GM13977 (cell line): ENCODE measurements at regions of chr18 and their contacts with region 1.

Region 1: GRCh38 chr18:32919799-32920198 is 147.0 kb upstream of the KLHL14 start:
- DNase-seq: peak; percentile 56
- CTCF ChIP-seq: peak; percentile 72

Region 2: GRCh38 chr18:32714571-32715148 is 205.1 kb before region 1 on chr18:
- in situ Hi-C with region 1: loop called (anchors 10 kb)
- DNase-seq: peak; percentile 53
- CTCF ChIP-seq: peak; percentile 90